Endothelial cell of umbilical vein (primary cell): ENCODE measurements at regions of chr4 and their contacts with region 1.

Region 1: DNA sequence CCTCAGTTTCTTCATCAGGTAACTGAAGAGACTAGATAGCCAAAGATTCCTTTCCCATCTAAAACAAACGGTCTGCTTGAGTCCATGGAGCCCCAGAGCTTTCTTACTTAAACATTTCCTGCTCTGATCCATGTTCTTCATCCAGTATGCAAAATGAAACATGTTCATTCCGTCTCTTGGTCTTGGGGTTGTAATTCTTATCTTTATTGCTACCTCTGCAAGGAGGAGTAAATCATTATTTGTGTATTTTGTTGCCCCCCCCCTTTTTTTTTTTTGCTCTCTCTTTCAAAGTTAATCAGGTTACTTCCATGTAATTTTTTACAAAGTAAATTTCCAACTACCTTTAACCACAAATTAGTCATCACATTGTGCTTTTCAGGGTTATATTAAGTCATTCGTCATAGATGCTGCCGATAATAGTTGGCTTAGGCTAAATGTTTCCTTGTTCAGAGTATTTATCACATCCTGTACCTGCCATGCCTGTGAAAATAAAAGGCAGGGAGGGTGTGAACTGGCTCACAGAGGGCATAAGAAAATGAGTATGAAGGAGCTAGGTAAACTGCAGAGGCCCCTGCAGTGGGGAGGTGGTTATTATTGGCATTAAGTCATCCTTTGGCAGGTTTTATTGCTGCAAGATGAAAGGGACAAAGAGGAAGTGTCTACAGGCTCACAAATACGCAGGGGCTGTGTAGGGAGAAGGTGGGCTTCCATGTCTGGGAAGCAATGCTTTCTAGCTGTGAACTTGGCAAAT is 76.7 kb upstream of the HS3ST1 start:
- DNase-seq: peak; percentile 96
- H3K4me3 ChIP-seq: no peak overlapping the region
- H3K27ac ChIP-seq: peak overlapping the region; percentile 54
- H3K4me1 ChIP-seq: peaks cover 17% of the 10 kb centered on the region
- H3K27me3 ChIP-seq: no peaks in the 10 kb centered on the region
- CTCF ChIP-seq: no peak
- POLR2A ChIP-seq: no peak

Region 2: DNA sequence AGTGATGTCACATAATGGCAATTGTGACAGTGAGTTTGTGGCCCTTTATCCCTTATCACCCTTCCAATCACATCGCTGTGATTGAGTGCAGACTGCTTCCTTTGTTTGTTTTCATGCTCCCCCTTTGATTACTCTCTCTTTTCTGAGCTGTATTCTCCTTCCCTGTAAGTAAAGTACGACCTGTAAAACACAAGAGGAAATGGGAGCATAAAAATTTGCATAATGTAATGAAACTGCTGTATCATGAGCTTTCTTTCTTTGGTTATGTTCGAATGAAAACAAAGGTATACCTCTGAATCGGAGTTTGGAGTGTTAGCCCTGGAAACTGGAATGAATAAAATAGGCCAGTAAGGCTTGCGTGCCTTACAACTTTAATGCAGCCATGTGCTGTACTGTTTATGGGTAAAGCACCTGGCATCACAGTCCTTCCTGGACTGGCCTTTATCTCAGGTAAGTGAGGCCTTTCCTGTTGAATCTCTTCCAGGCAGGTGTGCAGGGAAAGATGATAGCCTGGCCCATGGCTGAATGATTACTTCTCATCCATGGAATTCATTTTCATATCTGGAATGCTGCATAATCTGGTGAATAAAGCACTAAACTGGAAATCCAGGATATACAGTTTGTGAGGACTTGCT is 50.1 kb before region 1 on chr4:
- CTCF ChIA-PET with region 1: no interaction called
- POLR2A ChIA-PET with region 1: no interaction called
- dilution Hi-C with region 1: no loop called
- intact Hi-C with region 1: no loop called
- DNase-seq: no peak
- H3K4me3 ChIP-seq: no peak overlapping the region
- H3K27ac ChIP-seq: no peak overlapping the region
- H3K4me1 ChIP-seq: no peaks in the 10 kb centered on the region
- H3K27me3 ChIP-seq: no peaks in the 10 kb centered on the region
- CTCF ChIP-seq: no peak
- POLR2A ChIP-seq: no peak

Region 3: GRCh38 chr4:11471618-11472017 is 33.8 kb before region 1 on chr4:
- CTCF ChIA-PET with region 1: interaction called, 5 read pairs
- POLR2A ChIA-PET with region 1: no interaction called
- dilution Hi-C with region 1: no loop called
- intact Hi-C with region 1: loop called (anchors 1 kb)
- DNase-seq: peak; percentile 76
- H3K4me3 ChIP-seq: peak overlapping the region in 1 of 3 experiments; percentile 24
- H3K27ac ChIP-seq: peak overlapping the region; percentile 59
- H3K4me1 ChIP-seq: peaks cover 32% of the 10 kb centered on the region
- H3K27me3 ChIP-seq: no peaks in the 10 kb centered on the region
- CTCF ChIP-seq: no peak
- POLR2A ChIP-seq: no peak

Region 4: GRCh38 chr4:11529625-11530201 is 24.3 kb after region 1 on chr4:
- CTCF ChIA-PET with region 1: no interaction called
- POLR2A ChIA-PET with region 1: no interaction called
- dilution Hi-C with region 1: no loop called
- intact Hi-C with region 1: loop called (anchors 1 kb)
- DNase-seq: peak; percentile 93
- H3K4me3 ChIP-seq: no peak overlapping the region
- H3K27ac ChIP-seq: peak overlapping the region; percentile 82
- H3K4me1 ChIP-seq: peaks cover 27% of the 10 kb centered on the region
- H3K27me3 ChIP-seq: no peaks in the 10 kb centered on the region
- CTCF ChIP-seq: no peak
- POLR2A ChIP-seq: no peak